Body of pancreas (tissue), 4 donors: ENCODE measurements at regions of chr15 and their contacts with region 1.

Region 1: GRCh38 chr15:68829068-68829467 is 8.4 kb upstream of the ANP32A start:
- DNase-seq: peak in 1 of 4 donors; percentile 29
- ATAC-seq: no peak
- H3K4me3 ChIP-seq: no peak overlapping the region
- H3K27ac ChIP-seq: no peak overlapping the region
- H3K4me1 ChIP-seq: no peaks in the 10 kb centered on the region
- H3K27me3 ChIP-seq: peaks cover 0 to 2% of the 10 kb centered on the region in 2 donors
- CTCF ChIP-seq: peak in 5 of 7 experiments; percentile 15 to 45 (median 32)
- POLR2A ChIP-seq: no peak

Region 2: GRCh38 chr15:68783226-68784058 is 45.6 kb before region 1 on chr15:
- intact Hi-C with region 1: loop called (anchors 5 kb)
- DNase-seq: peak; percentile 64 to 81 (median 70)
- ATAC-seq: peak; percentile 70
- H3K4me3 ChIP-seq: no peak overlapping the region
- H3K27ac ChIP-seq: no peak overlapping the region
- H3K4me1 ChIP-seq: peaks cover 13% of the 10 kb centered on the region
- H3K27me3 ChIP-seq: no peaks in the 10 kb centered on the region
- CTCF ChIP-seq: peak; percentile 51 to 70 (median 60)
- POLR2A ChIP-seq: no peak